Left colon (tissue), 2 donors: ENCODE measurements at regions of chr7 and their contacts with region 1.

Region 1: GRCh38 chr7:47435889-47436312 is 146.0 kb downstream of the TNS3 start:
- DNase-seq: peak; percentile 72
- ATAC-seq: peak; percentile 96

Region 2: DNA sequence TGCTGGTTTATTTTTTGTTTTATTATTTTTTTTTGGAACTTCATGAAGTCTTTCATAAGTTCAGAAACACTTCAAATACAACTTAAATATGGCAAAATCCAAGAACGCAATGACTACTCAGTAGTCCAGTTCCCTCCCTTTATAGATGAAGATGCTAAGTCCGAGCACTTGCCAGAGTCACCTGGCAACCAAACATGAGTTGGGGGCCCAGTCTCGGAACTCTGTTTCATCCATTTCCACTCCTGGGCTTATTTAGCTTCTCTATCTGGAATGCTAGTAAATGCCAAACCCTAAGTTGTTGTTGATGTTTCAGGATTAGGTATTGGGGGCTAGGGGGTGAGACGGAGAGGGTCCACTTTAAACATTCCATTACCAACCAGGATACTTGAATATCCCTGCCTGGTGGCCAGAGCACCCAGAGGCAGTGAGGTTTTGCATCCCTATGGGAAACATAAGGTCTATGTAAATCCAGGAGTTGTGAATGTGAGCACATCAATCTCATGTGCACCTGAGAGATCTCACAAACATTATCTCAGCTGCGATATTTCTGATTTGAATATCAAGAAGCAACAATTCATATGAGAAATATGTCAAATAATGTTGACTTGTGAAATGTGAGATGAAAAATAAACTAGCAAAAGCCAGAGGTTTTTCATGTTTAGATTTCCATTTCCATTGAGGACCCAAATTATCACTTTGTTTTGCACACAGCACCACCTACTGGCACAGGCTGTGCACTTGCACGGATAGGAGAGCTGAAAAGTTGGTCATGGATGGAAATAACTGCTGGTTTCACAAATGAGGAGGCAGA is 383.1 kb after region 1 on chr7:
- intact Hi-C with region 1: loop called (anchors 5 to 10 kb)
- DNase-seq: peak; percentile 41 to 77
- ATAC-seq: peak; percentile 75